Breast epithelium (tissue), 4 donors: ENCODE measurements at regions of chr4 and their contacts with region 1.

Region 1: GRCh38 chr4:165758086-165758485 is 115.0 kb upstream of the TLL1 start:
- DNase-seq: no peak
- H3K4me3 ChIP-seq: no peak overlapping the region
- H3K27ac ChIP-seq: no peak overlapping the region
- H3K4me1 ChIP-seq: no peaks in the 10 kb centered on the region
- H3K27me3 ChIP-seq: no peaks in the 10 kb centered on the region
- CTCF ChIP-seq: no peak
- POLR2A ChIP-seq: no peak

Region 2: DNA sequence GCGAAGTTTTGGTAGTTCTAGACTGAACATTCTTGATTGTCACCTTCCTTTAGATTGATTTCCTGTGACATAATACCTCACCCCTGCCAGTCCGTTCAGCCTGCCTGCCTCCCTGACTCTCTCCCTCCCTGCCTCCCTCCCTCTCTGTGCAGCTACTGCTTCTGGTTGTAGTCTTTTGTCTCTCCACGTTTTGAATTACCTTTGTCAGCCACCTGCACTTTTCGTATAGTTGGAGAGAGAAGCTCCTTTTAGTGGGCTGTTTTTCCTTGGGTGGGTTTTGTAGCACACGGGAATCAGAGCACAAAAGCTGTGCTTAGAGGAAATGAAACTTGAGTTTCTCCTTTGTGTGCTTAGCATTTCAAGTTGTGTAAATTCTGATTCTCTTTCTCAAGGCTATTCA is 463.2 kb before region 1 on chr4:
- intact Hi-C with region 1: no loop called
- DNase-seq: no peak
- H3K4me3 ChIP-seq: no peak overlapping the region
- H3K27ac ChIP-seq: no peak overlapping the region
- H3K4me1 ChIP-seq: no peaks in the 10 kb centered on the region
- H3K27me3 ChIP-seq: no peaks in the 10 kb centered on the region
- CTCF ChIP-seq: no peak
- POLR2A ChIP-seq: no peak

Region 3: DNA sequence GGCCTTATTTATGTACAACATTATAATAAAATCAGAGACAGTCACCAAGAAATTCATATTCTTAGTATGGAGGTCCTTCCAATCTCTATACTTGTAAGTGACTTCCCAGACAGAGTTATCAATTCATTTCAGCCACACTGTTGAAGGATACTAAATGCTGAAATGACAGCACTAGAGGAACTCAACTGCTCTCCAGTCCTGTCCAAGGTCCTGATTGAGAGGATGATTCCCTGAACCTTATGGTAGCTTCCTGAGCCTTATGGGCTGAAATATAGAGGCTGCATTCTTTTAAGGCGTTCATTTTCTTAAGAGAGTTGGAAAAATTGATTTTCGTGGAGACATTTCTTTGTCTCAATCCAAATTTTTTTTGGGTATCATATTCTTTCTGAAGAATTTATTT is 320.9 kb after region 1 on chr4:
- intact Hi-C with region 1: no loop called
- DNase-seq: no peak
- H3K4me3 ChIP-seq: no peak overlapping the region
- H3K27ac ChIP-seq: no peak overlapping the region
- H3K4me1 ChIP-seq: no peaks in the 10 kb centered on the region
- H3K27me3 ChIP-seq: no peaks in the 10 kb centered on the region
- CTCF ChIP-seq: no peak
- POLR2A ChIP-seq: no peak

Region 4: DNA sequence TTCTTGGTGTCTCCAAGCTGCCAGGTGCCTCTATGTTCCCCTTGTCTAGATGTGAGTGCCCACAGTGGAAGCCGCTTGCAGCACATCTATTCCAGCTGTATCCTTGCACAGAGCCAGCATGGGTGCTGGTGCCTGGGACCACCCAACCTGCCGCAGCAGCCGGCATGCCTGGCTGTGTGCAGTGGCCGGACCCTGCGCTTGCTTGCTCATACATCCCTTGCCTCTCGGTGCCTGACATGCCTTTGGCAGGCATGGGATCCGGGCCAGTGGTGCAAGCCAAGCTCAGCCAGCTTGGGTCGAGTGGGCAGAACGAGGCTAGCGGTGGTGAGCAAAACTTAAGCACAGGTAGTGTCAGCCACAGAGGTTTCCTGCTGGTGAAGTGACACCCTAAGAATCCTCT is 470.0 kb after region 1 on chr4:
- intact Hi-C with region 1: loop called (anchors 5 kb)
- DNase-seq: no peak
- H3K4me3 ChIP-seq: no peak overlapping the region
- H3K27ac ChIP-seq: no peak overlapping the region
- H3K4me1 ChIP-seq: no peaks in the 10 kb centered on the region
- H3K27me3 ChIP-seq: no peaks in the 10 kb centered on the region
- CTCF ChIP-seq: no peak
- POLR2A ChIP-seq: no peak